ENCODE measurements at regions of chr6 and their contacts with region 1.

Region 1: GRCh38 chr6:166786704-166787293 is 159.7 kb upstream of the RPS6KA2 start:
- DNase-seq: peak; percentile 51
- H3K4me3 ChIP-seq: no peak overlapping the region
- H3K27ac ChIP-seq: no peak overlapping the region
- H3K4me1 ChIP-seq: no peaks in the 10 kb centered on the region
- H3K27me3 ChIP-seq: no peaks in the 10 kb centered on the region
- CTCF ChIP-seq: peak; percentile 48 to 79 (median 74)
- POLR2A ChIP-seq: no peak

Region 2: DNA sequence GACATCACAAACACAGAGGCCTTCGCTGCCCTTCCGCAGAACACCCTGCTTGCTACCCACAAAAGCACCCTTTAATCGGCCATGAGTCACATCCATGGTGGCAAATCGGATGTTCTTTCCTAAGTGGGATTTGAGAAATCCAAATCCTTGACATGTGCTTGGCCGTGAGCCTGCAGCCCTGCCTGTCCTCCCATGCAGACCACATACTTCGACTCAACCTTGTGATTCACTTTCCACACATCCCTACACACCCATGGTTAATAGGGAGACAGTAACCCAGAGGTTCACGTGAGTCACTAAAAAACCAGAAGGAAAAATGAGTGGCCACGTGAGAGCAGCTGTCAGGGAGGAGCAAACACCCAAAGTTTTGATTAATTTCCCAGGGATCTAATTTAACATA is 219.7 kb before region 1 on chr6:
- intact Hi-C with region 1: no loop called
- DNase-seq: no peak
- H3K4me3 ChIP-seq: no peak overlapping the region
- H3K27ac ChIP-seq: no peak overlapping the region
- H3K4me1 ChIP-seq: no peaks in the 10 kb centered on the region
- H3K27me3 ChIP-seq: no peaks in the 10 kb centered on the region
- CTCF ChIP-seq: no peak
- POLR2A ChIP-seq: no peak

Region 3: DNA sequence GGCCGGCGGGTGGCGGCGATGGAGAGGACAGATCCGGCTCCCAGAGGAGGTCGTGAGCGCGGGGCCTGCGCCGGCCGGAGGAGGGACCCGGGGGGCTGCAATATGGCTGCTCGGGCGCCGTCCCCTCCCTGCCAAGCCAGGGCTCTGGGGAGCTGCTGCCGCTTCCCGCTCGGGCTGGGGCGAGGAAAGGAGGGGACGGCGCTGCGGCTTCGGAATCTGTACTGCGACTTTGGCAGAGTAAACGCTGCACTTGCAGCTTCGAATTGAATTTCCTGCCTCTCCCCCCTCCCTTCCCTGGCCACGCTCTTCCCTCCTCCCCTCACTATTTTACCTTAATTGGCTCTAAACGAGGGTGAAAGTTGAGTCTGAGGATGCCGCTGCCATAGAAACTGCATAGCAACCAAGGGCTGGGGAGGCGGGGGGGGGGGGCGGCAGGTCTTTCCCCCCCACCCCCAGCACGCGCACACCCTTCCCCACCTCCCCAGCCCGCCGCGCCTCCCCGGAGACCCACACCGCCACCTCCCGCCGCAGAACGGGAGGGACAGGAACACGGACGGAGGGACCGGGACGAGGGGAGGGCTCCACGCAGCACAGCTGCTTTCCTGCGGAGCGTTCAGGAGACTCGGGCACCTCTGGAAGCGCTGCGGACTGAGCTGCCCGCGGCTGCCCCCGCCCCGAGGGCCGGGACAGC is 75.6 kb after region 1 on chr6:
- intact Hi-C with region 1: loop called (anchors 2 kb)
- DNase-seq: peak; percentile 21
- H3K4me3 ChIP-seq: peak overlapping the region; percentile 39 to 42
- H3K27ac ChIP-seq: peak overlapping the region; percentile 6 to 31
- H3K4me1 ChIP-seq: no peaks in the 10 kb centered on the region
- H3K27me3 ChIP-seq: no peaks in the 10 kb centered on the region
- CTCF ChIP-seq: no peak
- POLR2A ChIP-seq: no peak

Region 4: DNA sequence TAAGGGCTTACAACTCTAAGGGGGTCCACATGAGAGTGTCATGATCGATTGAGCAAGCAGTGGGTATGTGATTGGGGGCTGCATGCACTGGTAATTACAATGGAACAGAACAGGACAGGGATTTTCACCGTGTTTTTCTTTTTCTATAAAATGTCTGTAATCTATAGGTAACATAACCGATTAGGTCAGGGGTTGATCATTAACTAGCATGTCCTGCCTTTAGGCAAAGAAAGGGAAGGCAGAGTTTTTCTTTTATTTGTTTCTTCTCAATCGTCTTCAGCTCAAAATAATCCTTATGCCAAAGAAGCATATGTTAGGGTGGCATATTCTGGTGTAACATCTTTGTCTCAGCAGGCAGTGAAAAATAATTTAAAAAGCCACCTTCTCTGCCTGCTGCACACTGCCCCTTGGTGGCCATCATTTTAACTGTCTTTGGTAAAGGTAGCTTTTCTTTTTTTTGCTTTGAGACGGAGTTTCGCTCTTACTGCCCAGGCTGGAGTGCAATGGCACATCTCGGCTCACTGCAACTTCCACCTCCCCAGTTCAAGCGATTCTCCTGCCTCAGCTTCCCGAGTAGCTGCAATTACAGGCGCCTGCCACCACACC is 202.7 kb after region 1 on chr6:
- intact Hi-C with region 1: loop called (anchors 2 kb)
- DNase-seq: no peak
- H3K4me3 ChIP-seq: no peak overlapping the region
- H3K27ac ChIP-seq: peak overlapping the region; percentile 23 to 51
- H3K4me1 ChIP-seq: peaks cover 4% of the 10 kb centered on the region
- H3K27me3 ChIP-seq: no peaks in the 10 kb centered on the region
- CTCF ChIP-seq: peak in 3 of 4 experiments; percentile 28 to 65 (median 47)
- POLR2A ChIP-seq: no peak

Region 5: DNA sequence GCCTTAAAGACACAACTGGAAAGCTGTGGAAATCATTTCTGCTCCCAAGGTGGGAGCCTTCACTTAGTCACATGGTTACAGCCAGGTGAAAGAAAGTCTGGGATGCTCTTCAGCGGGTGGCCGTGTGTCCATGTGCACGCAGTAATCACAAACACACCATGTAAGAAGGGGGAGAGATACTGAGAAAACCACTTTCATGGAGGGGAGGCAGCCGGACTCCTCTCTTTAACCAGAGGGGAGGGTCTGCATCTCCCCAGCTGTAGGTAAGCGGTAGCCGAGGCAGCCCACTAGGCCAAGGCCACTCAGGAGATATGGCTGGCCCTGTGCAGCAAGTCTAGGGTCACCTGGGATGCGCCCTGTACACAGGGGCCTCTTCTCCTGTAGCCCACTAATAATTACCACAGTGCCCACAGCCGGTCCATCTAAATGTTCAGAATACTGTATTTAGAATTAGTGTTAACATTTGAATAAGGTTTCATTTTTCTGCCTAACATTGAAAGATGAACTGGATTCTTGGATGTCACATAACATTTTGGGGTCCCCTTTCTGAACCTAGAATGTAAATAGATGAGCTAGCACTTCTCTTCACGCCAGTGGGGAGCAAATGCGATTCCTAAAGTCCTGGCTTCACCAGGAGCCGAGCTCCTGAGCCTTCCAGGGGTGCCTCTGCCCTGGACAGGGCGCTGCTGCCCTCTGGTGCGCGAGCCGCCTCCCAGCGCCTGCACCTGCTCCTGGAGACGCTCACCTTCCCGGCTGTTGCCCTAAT is 355.1 kb after region 1 on chr6:
- intact Hi-C with region 1: loop called (anchors 5 kb)
- DNase-seq: peak; percentile 15
- H3K4me3 ChIP-seq: no peak overlapping the region
- H3K27ac ChIP-seq: no peak overlapping the region
- H3K4me1 ChIP-seq: no peaks in the 10 kb centered on the region
- H3K27me3 ChIP-seq: no peaks in the 10 kb centered on the region
- CTCF ChIP-seq: peak in 3 of 4 experiments; percentile 42 to 72 (median 68)
- POLR2A ChIP-seq: no peak

Measured in prostate gland (tissue), 2 donors.